ENCODE measurements at regions of chr12 and their contacts with region 1.

Region 1: GRCh38 chr12:54958048-54958658 is 26.4 kb downstream of the TESPA1 start:
- DNase-seq: no peak
- ATAC-seq: peak; percentile 77 to 86 (median 81)
- H3K4me3 ChIP-seq: no peak overlapping the region
- H3K27ac ChIP-seq: no peak overlapping the region
- H3K4me1 ChIP-seq: no peaks in the 10 kb centered on the region
- H3K27me3 ChIP-seq: peaks cover 0 to 8% of the 10 kb centered on the region in 2 donors
- CTCF ChIP-seq: peak; percentile 65 to 80 (median 76)
- POLR2A ChIP-seq: no peak

Region 2: DNA sequence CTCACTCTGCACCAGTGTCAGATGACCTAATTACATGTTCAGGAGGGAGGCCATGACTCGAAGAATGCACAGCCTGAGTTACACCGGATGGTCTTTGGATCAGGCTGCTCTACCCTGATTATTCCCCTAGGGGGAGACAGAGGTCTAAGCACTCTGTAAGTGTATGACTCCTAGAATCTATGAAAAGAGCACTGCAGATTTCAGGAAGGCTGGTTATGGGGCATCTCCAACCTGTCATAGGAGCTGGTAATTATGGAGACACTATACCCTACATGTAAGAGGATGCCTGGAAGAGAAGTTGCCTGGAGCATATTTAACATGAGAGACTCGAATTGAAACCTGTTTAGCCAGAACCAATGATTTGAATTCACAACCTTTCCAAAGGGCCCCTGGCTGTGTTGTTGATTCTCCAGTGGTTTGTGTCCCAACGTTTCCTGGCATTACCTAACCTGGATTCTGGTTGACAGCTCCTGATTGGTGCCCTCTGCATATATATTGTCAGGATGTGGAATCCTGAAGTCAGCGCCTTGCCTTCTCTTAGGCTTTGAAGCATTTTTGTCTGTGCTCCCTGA is 104.1 kb before region 1 on chr12 and contains the start of gene MUCL1:
- intact Hi-C with region 1: loop called (anchors 5 to 10 kb)
- DNase-seq: peak in 1 of 3 donors; percentile 69
- ATAC-seq: peak; percentile 99 to 100 (median 100)
- H3K4me3 ChIP-seq: no peak within 1 kb of the TSS
- H3K27ac ChIP-seq: no peak within 1 kb of the TSS
- H3K4me1 ChIP-seq: no peaks in the 10 kb centered on the region
- H3K27me3 ChIP-seq: no peaks in the 10 kb centered on the region
- CTCF ChIP-seq: peak; percentile 81 to 93 (median 89)
- POLR2A ChIP-seq: no peak
- total RNA-seq, gene MUCL1: not detected

Measured in right lobe of liver (tissue), 6 donors.